Panc1 (cell line): ENCODE measurements at regions of chr11 and their contacts with region 1.

Region 1: DNA sequence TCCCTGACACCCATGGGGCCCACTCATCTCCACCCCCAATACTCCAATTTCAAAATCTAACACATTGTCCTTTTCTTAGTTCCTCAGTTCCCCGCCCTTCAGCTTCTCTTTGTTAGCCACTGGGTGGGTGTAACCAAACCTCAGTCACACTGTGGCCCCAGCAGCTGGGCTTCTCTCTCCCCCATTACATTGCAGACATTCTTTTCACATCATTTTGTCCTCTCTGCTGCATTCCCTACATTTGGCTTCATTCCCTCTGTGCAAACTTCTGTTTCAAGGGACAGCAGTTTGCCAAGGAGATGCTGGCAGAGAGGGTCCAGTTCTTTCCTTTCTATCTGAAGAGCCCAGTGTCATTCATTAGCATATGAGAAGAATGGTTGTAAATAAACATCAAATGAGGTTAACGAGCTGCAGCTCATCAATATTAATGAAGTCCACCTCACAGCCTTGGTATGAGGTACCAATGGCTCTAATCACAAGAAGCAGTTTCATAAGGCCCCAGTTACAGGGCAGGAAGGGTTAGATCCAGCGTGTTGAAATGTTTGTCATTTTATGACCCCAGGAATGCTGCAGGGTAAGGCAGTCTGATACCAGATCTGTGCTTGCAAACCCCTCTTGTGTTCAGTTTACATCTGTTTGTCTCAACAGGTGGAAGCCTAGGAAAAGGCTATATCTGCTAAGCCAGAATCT is 72.3 kb downstream of the ARFGAP2 start:
- DNase-seq: no peak
- ATAC-seq: no peak
- H3K4me3 ChIP-seq: no peak overlapping the region
- H3K27ac ChIP-seq: no peak overlapping the region
- H3K4me1 ChIP-seq: no peaks in the 10 kb centered on the region
- H3K27me3 ChIP-seq: no peaks in the 10 kb centered on the region
- CTCF ChIP-seq: no peak

Region 2: GRCh38 chr11:47124675-47125074 is 20.3 kb after region 1 on chr11:
- CTCF ChIA-PET with region 1: no interaction called
- POLR2A ChIA-PET with region 1: no interaction called
- in situ Hi-C with region 1: no loop called
- intact Hi-C with region 1: no loop called
- DNase-seq: no peak
- ATAC-seq: no peak
- H3K4me3 ChIP-seq: no peak overlapping the region
- H3K27ac ChIP-seq: no peak overlapping the region
- H3K4me1 ChIP-seq: no peaks in the 10 kb centered on the region
- H3K27me3 ChIP-seq: no peaks in the 10 kb centered on the region
- CTCF ChIP-seq: no peak

Region 3: DNA sequence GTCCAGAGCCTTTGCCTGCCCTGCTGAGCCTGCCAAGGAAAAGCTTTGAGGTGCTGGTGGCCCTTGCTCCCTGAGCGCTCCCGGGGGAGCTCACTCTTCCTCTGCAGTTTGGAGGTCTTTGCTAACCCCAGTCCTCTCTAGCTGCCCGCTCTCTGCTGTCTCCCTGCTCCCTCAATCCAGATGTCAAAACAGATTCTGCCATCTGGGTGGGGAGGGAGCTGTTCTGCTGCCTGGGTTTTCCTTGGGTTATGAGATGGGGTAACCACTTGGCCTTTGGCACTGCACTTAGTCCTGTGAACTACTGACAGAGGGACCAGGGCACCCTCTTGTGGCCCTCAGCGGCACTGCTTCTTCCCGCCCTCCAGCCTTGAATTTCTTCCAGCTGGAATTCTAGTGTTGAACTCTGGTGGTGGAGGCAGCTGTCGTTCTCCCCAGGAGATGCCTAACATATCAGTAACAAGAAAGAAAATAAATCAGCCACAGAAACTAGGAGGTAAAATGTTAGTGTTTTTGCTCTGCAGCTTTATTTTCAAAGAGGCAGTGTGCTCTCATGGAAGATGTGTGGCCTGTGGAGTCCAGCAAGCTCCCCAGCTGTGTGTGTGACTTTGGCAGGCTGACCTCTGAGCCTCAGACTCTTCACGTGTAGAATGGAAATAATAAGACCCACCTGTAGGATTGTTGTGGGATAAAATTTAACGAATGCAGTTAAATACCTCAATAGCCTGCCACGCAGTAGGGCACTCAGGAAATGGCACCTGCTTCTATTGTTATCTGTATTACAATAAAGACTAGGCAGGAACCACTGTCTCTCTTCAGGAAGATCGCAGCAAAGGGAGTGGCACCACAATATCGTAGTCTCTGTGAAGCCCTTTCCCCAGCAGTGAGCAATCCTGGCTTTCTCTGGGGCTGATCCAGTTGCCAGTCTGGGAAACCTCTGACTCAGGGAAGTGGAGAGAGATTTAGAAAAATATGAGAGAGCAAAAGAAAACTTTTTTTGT is 48.8 kb after region 1 on chr11:
- CTCF ChIA-PET with region 1: interaction called, 12 read pairs
- POLR2A ChIA-PET with region 1: no interaction called
- in situ Hi-C with region 1: no loop called
- intact Hi-C with region 1: no loop called
- DNase-seq: no peak
- ATAC-seq: peak; percentile 88
- H3K4me3 ChIP-seq: no peak overlapping the region
- H3K27ac ChIP-seq: no peak overlapping the region
- H3K4me1 ChIP-seq: peaks cover 4% of the 10 kb centered on the region; the same call in 1 of the 2 replicates
- H3K27me3 ChIP-seq: no peaks in the 10 kb centered on the region
- CTCF ChIP-seq: peak; percentile 97